CD8-positive, alpha-beta memory T cell (primary cell): ENCODE measurements at regions of chr20 and their contacts with region 1.

Region 1: GRCh38 chr20:57391074-57391554 is at the start of gene RBM38:
- DNase-seq: peak; percentile 65 to 80 (median 69)
- H3K4me3 ChIP-seq: peak within 1 kb of the TSS; percentile 96
- H3K4me3 Mint-ChIP-seq: peak within 1 kb of the TSS; percentile 88 to 99 (median 94)
- H3K27ac ChIP-seq: peak within 1 kb of the TSS; percentile 96
- H3K27ac Mint-ChIP-seq: peak within 1 kb of the TSS; percentile 90 to 100 (median 99)
- H3K4me1 ChIP-seq: peaks cover 48% of the 10 kb centered on the region
- H3K4me1 Mint-ChIP-seq: peaks cover 45 to 57% (median 46%) of the 10 kb centered on the region in 3 donors
- H3K27me3 ChIP-seq: no peaks in the 10 kb centered on the region
- H3K27me3 Mint-ChIP-seq: peaks cover 0 to 5% of the 10 kb centered on the region in 2 donors
- total RNA-seq, gene RBM38: 101 to 107 TPM

Region 2: GRCh38 chr20:57266291-57267157 is 124.6 kb before region 1 on chr20 and contains the start of gene BMP7:
- CTCF ChIA-PET with region 1: no interaction called
- POLR2A ChIA-PET with region 1: no interaction called
- DNase-seq: no peak
- H3K4me3 ChIP-seq: no peak within 1 kb of the TSS
- H3K4me3 Mint-ChIP-seq: no peak within 1 kb of the TSS
- H3K27ac ChIP-seq: no peak within 1 kb of the TSS
- H3K27ac Mint-ChIP-seq: peak within 1 kb of the TSS in 1 of 8 donors; percentile 34
- H3K4me1 ChIP-seq: no peaks in the 10 kb centered on the region
- H3K4me1 Mint-ChIP-seq: peaks cover 0 to 9% (median 0%) of the 10 kb centered on the region in 3 donors
- H3K27me3 ChIP-seq: peaks cover 15% of the 10 kb centered on the region
- H3K27me3 Mint-ChIP-seq: peaks cover 23 to 53% of the 10 kb centered on the region in 2 donors
- total RNA-seq, gene BMP7: not detected

Region 3: DNA sequence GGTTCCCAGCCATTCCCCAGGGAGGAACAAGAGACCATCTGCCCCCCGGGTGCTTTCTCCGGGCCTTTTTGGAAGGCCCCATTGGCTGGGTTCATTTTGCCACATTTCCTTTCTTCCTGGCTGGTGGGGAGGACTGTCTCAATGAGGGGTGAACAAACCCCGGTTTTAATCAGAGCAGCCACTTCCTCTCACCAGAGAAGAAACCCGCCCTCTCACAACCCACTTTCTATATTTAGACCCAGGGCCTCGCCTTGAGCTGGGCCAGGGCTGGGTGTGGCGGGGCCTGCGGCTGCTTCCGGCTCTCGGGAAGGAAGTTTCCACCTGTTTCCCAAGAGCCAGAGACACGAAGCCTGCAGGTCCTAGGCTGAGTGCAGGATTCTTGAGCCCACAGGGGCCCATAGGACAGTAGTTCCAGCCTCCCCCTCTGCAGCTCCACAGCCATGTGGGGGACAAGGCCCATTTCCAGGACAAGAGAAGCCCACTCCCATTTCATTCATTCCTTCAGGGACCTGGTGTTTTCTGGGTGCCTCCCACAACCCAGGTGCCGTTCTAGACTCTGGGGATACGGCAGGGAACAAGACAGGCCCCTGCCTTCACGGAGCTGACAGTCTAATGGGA is 41.9 kb after region 1 on chr20:
- CTCF ChIA-PET with region 1: interaction called, 46 read pairs
- POLR2A ChIA-PET with region 1: interaction called, 20 read pairs
- DNase-seq: peak; percentile 45 to 81 (median 75)
- H3K4me3 ChIP-seq: peak overlapping the region; percentile 71
- H3K4me3 Mint-ChIP-seq: peak overlapping the region; percentile 24 to 89 (median 74)
- H3K27ac ChIP-seq: peak overlapping the region; percentile 66
- H3K27ac Mint-ChIP-seq: peak overlapping the region; percentile 81 to 97 (median 92)
- H3K4me1 ChIP-seq: peaks cover 62% of the 10 kb centered on the region
- H3K4me1 Mint-ChIP-seq: peaks cover 49 to 68% (median 64%) of the 10 kb centered on the region in 3 donors
- H3K27me3 ChIP-seq: no peaks in the 10 kb centered on the region
- H3K27me3 Mint-ChIP-seq: no peaks in the 10 kb centered on the region

Region 4: DNA sequence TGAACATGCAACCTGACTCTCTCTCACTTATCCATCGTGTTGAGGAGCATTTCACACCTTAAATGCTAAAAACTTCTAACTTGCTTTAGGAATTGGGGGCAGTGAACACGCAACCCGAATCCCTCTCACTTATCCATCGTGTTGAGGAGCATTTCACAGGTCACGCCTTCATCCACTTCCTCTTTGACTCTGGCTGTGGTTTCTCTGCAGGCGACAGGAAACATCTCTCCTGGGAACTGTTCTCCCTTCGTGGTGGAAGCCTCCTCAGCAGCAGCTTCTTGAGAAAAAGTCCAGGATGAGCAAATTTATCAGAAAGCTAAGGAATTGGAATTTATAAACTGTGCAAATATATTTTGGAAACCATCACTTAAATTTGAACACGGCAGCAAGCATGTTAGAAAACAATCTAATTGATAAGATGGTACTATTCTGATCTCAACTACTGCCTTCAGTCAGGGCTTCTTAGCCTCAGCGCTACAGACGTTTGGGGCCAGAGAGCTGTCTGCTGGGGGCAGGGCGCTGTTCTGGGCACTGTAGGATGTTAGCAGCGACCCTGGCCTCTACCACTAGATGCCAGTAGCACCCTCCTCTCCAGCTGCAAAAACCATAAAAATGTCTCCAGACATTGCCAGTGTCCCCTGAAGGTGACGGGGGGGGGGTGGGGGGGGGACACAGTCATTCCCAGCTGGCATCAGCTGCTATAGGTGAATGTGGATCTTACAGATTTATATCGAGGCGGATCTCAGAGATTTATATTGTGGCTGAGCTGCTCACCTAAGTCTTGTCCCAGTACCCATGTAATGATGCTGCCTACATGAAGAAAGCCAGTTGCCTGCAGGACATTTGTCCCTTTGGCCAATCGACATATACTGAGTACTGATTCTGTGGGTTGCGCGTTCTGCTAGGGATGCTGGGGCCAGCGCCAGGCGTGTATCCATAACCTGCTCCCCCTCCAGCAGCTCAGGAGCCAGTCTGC is 107.6 kb after region 1 on chr20:
- CTCF ChIA-PET with region 1: interaction called, 13 read pairs
- POLR2A ChIA-PET with region 1: interaction called, 3 read pairs
- DNase-seq: peak in 1 of 5 donors; percentile 26
- H3K4me3 ChIP-seq: no peak overlapping the region
- H3K4me3 Mint-ChIP-seq: no peak overlapping the region
- H3K27ac ChIP-seq: no peak overlapping the region
- H3K27ac Mint-ChIP-seq: peak overlapping the region in 1 of 8 donors; percentile 14
- H3K4me1 ChIP-seq: peaks cover 11% of the 10 kb centered on the region
- H3K4me1 Mint-ChIP-seq: peaks cover 8 to 14% (median 13%) of the 10 kb centered on the region in 3 donors
- H3K27me3 ChIP-seq: peaks cover 6% of the 10 kb centered on the region
- H3K27me3 Mint-ChIP-seq: peaks cover 32 to 60% of the 10 kb centered on the region in 2 donors

Region 5: DNA sequence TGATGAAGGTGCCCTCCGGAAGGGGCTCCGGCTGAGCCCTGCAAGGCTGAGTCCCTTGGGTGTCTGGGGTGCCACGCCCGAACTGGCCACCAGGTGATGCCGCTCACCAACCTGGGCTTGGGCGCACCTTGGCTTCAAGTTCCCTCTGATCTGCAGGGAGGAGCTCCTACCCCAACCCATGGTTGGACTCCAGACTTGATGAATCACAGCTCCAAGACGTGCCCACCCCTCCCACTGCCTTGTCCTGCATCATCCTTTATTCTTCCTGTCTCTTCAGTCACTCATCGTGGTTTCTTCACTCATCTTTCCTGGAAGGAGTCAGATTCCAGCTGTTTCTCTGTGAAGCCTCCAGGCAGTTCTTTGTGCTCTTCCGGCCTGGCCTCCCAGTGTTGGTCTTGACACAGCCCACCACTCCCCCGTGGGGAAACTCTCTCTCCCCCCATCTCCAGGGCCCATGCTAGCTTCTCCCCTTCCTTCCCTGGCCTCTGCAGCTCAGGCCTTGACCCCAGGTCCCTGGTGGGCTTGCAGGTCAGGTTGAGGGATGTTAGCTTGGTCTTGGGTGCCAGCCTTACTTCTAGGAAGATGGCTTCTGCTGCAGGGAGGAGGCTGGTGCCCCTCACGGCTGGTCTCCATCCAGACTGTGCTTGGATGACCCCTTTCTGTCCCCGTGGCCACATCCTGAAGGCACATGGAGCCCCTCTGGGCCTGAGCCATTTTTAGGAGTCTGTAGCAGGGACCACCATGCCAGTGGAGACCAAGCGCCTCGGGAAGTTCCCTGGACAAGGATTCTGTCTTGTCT is 231.7 kb after region 1 on chr20:
- CTCF ChIA-PET with region 1: interaction called, 3 read pairs
- POLR2A ChIA-PET with region 1: interaction called, 16 read pairs
- DNase-seq: peak; percentile 48 to 79 (median 55)
- H3K4me3 ChIP-seq: no peak overlapping the region
- H3K4me3 Mint-ChIP-seq: peak overlapping the region in 5 of 7 donors; percentile 26 to 81 (median 69)
- H3K27ac ChIP-seq: no peak overlapping the region
- H3K27ac Mint-ChIP-seq: peak overlapping the region; percentile 46 to 94 (median 88)
- H3K4me1 ChIP-seq: peaks cover 72% of the 10 kb centered on the region
- H3K4me1 Mint-ChIP-seq: peaks cover 63 to 79% (median 75%) of the 10 kb centered on the region in 3 donors
- H3K27me3 ChIP-seq: no peaks in the 10 kb centered on the region
- H3K27me3 Mint-ChIP-seq: peaks cover 0 to 3% of the 10 kb centered on the region in 2 donors